Mammary epithelial cell (primary cell): ENCODE measurements at regions of chr17 and their contacts with region 1.

Region 1: GRCh38 chr17:35969558-35970380 is 11.5 kb downstream of the CCL16 start:
- DNase-seq: peak; percentile 53
- H3K4me3 ChIP-seq: no peak overlapping the region
- H3K27ac ChIP-seq: no peak overlapping the region
- H3K4me1 ChIP-seq: peaks cover 12% of the 10 kb centered on the region
- H3K27me3 ChIP-seq: no peaks in the 10 kb centered on the region
- CTCF ChIP-seq: peak; percentile 76 to 80

Region 2: DNA sequence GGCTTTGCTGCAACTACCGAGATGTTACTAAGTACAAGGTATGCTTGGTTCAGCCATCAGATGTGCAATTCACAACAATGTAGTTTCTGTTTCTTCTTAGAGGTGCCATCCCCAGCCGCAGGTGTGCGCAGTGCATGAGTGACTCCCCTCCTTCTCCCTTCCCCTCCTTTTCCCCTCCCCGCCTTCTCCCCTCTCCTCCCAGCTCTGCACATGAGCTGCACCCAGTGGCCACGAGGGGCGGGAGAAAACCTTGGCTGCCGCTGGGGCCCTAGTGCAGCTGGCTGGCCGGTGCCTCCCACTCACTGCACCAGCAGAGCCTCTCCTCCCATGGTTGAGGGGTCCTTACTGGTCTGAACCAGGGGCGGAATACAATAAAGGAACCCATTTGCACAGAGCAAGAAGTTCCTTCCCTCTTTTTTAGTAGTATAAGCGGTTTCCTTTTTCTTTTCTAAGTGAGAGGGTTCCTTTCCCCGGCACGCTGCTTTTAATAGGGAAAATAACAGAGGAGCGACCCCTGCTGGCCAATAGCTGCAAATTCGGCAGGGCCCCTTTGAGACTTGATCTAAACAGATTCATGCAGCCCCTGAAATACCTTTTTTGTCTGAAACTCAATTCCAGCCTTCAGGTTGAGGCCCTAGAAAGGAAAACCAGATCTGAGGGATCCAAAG is 39.4 kb after region 1 on chr17:
- CTCF ChIA-PET with region 1: interaction called, 5 read pairs
- dilution Hi-C with region 1: no loop called
- in situ Hi-C with region 1: no loop called
- intact Hi-C with region 1: loop called (anchors 1 kb)
- DNase-seq: peak; percentile 7
- H3K4me3 ChIP-seq: no peak overlapping the region
- H3K27ac ChIP-seq: no peak overlapping the region
- H3K4me1 ChIP-seq: no peaks in the 10 kb centered on the region
- H3K27me3 ChIP-seq: no peaks in the 10 kb centered on the region
- CTCF ChIP-seq: peak; percentile 49

Region 3: DNA sequence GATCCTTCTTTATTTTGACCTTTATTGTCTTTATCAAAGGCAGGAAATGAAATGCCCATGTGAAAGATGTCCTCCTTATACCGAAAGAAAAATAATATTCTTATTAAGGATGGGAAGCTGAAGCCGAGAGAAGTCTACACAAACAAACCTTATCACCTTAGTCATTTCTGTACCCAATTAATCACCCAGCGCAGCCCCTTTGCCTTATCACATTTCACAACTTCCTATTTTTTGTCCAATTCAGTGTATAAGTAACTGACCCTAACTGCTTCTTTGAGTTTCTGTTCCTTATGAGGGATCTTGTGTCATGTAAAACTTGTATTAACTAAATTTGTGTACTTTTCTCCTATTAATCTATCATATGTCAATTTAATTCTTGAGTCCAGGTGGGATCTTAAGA is 64.4 kb after region 1 on chr17:
- CTCF ChIA-PET with region 1: no interaction called
- dilution Hi-C with region 1: no loop called
- in situ Hi-C with region 1: loop called in 1 of 2 experiments (anchors 10 kb)
- intact Hi-C with region 1: no loop called
- DNase-seq: no peak
- H3K4me3 ChIP-seq: no peak overlapping the region
- H3K27ac ChIP-seq: no peak overlapping the region
- H3K4me1 ChIP-seq: peaks cover 11% of the 10 kb centered on the region
- H3K27me3 ChIP-seq: no peaks in the 10 kb centered on the region
- CTCF ChIP-seq: no peak

Region 4: GRCh38 chr17:36072431-36073121 is 102.8 kb after region 1 on chr17:
- CTCF ChIA-PET with region 1: interaction called, 16 read pairs
- dilution Hi-C with region 1: no loop called
- in situ Hi-C with region 1: loop called in 1 of 2 experiments (anchors 10 kb)
- intact Hi-C with region 1: loop called (anchors 1 kb)
- DNase-seq: peak; percentile 21
- H3K4me3 ChIP-seq: no peak overlapping the region
- H3K27ac ChIP-seq: no peak overlapping the region
- H3K4me1 ChIP-seq: no peaks in the 10 kb centered on the region
- H3K27me3 ChIP-seq: no peaks in the 10 kb centered on the region
- CTCF ChIP-seq: peak; percentile 65 to 75

Region 5: GRCh38 chr17:36133602-36134236 is 163.9 kb after region 1 on chr17:
- CTCF ChIA-PET with region 1: interaction called, 25 read pairs
- dilution Hi-C with region 1: no loop called
- in situ Hi-C with region 1: no loop called
- intact Hi-C with region 1: no loop called
- DNase-seq: no peak
- H3K4me3 ChIP-seq: no peak overlapping the region
- H3K27ac ChIP-seq: no peak overlapping the region
- H3K4me1 ChIP-seq: no peaks in the 10 kb centered on the region
- H3K27me3 ChIP-seq: peaks cover 7% of the 10 kb centered on the region
- CTCF ChIP-seq: no peak

Region 6: DNA sequence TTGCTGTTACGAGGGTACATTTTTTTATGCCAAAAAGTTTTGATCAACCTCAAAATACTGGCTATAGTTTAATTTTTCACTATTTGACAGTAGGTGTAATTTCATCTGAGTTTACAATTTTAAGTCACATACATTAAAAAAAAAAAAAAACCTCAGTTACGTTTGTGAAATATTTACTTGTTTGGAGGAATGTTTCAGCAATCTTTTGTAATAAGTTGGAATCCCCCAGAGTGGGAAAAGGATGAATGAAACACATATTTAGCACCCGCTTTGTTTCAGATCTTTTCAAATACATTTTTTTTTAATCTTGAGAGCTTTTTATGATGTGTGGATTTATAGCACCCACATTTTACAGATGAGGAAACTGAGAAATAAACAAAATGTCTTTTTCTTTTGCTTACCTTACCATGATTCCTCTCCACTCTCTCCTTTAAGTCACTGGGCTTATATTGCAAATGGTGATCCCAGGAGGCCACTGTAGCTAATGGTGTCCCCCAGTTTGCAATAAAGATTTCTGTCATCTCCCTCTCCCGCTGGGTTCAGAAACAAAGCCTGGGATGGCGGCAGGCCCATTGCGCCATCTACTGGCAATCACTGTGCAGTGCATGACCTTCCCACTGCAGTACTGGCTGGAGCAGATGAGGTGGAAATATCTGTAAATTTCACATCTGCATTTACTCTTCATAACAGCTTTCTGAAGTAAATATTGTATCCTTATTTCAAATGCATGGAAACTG is 179.0 kb after region 1 on chr17:
- CTCF ChIA-PET with region 1: interaction called, 11 read pairs
- dilution Hi-C with region 1: no loop called
- in situ Hi-C with region 1: loop called (anchors 5 kb)
- intact Hi-C with region 1: loop called (anchors 1 kb)
- DNase-seq: peak; percentile 24
- H3K4me3 ChIP-seq: no peak overlapping the region
- H3K27ac ChIP-seq: no peak overlapping the region
- H3K4me1 ChIP-seq: no peaks in the 10 kb centered on the region
- H3K27me3 ChIP-seq: peaks cover 2% of the 10 kb centered on the region
- CTCF ChIP-seq: peak; percentile 99